ENCODE measurements at regions of chr11 and their contacts with region 1.

Region 1: GRCh38 chr11:65366340-65366773 is 11.8 kb downstream of the TIGD3 start:
- DNase-seq: peak; percentile 70 to 83 (median 76)
- ATAC-seq: peak; percentile 82
- H3K4me3 ChIP-seq: no peak overlapping the region
- H3K27ac ChIP-seq: peak overlapping the region; percentile 12; the same call in 2 of the 3 replicates
- H3K4me1 ChIP-seq: peaks cover 34 to 40% of the 10 kb centered on the region in 2 experiments; a peak in 4 of 5 replicates
- H3K27me3 ChIP-seq: no peaks in the 10 kb centered on the region
- CTCF ChIP-seq: peak; percentile 74 to 93 (median 78)
- EP300 ChIP-seq: no peak
- POLR2A ChIP-seq: no peak
- RAD21 ChIP-seq: peak; percentile 90 to 93

Region 2: DNA sequence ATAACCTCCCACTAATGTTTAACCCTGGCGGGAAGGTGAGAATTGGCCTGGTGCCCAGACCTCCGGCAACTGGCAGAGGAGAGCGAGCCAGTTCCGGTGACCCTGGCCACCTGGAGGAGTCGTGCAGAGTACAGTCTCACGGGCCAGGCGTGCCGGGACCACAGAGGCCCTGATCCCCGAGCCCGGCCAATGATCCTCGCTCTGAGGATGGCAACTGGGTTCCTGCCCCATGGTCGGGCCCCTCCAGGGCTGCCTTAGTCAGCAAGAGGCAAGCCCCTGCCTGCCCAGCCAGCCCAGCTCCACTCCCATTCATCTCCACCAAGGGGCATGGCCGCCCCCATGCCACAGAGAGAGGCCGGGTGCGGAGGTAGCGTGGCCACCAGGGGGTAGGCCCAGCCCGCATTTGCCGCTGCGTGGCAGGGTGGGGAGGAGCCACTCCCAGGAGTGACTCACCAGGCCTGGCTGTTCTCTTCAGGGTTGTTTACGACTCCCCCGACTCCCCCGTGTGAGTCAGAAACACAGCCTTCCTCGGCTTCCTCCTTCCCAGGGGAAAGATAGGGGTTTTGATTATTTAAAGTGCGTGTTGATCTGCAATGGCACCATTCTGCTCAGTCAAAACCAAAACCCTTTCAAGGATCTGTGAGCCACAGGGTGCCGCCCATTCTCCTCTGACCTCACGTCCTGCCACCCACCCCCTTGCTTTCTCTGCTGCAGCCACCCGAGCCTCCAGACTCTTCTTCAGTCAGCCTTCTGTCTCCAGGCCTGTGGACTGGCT is 15.9 kb after region 1 on chr11 and contains the start of gene SLC25A45:
- CTCF ChIA-PET with region 1: interaction called, 8 read pairs
- POLR2A ChIA-PET with region 1: interaction called, 15 read pairs
- in situ Hi-C with region 1: no loop called
- intact Hi-C with region 1: no loop called
- DNase-seq: peak; percentile 86 to 96 (median 90)
- ATAC-seq: peak; percentile 93
- H3K4me3 ChIP-seq: peak within 1 kb of the TSS; percentile 37
- H3K27ac ChIP-seq: peak within 1 kb of the TSS; percentile 93
- H3K4me1 ChIP-seq: peaks cover 35 to 81% of the 10 kb centered on the region in 2 experiments
- H3K27me3 ChIP-seq: no peaks in the 10 kb centered on the region
- CTCF ChIP-seq: peak; percentile 84 to 92 (median 91)
- EP300 ChIP-seq: peak; percentile 85
- POLR2A ChIP-seq: peak; percentile 73
- RAD21 ChIP-seq: peak; percentile 93 to 95
- polyA plus RNA-seq, gene SLC25A45: 0.15 to 0.34 TPM

Region 3: GRCh38 chr11:65432686-65433582 is 66.6 kb after region 1 on chr11:
- CTCF ChIA-PET with region 1: interaction called, 4 read pairs
- POLR2A ChIA-PET with region 1: interaction called, 4 read pairs
- in situ Hi-C with region 1: no loop called
- intact Hi-C with region 1: loop called (anchors 2 kb)
- DNase-seq: peak in 1 of 4 experiments; percentile 62
- ATAC-seq: no peak
- H3K4me3 ChIP-seq: no peak overlapping the region
- H3K27ac ChIP-seq: no peak overlapping the region
- H3K4me1 ChIP-seq: peaks cover 3 to 29% of the 10 kb centered on the region in 2 experiments; a peak in 4 of 5 replicates
- H3K27me3 ChIP-seq: no peaks in the 10 kb centered on the region
- CTCF ChIP-seq: peak; percentile 27 to 61 (median 32); a peak in 3 of 6 replicates
- EP300 ChIP-seq: no peak
- POLR2A ChIP-seq: peak; percentile 64
- RAD21 ChIP-seq: peak; percentile 59 to 71

Region 4: GRCh38 chr11:65471410-65471762 is 105.0 kb after region 1 on chr11:
- CTCF ChIA-PET with region 1: interaction called, 6 read pairs
- POLR2A ChIA-PET with region 1: interaction called, 12 read pairs
- in situ Hi-C with region 1: no loop called
- intact Hi-C with region 1: loop called (anchors 1 kb)
- DNase-seq: peak; percentile 63 to 91 (median 77)
- ATAC-seq: peak; percentile 88
- H3K4me3 ChIP-seq: peak overlapping the region; percentile 42
- H3K27ac ChIP-seq: peak overlapping the region; percentile 96
- H3K4me1 ChIP-seq: peaks cover 38 to 55% of the 10 kb centered on the region in 2 experiments
- H3K27me3 ChIP-seq: no peaks in the 10 kb centered on the region
- CTCF ChIP-seq: peak; percentile 81 to 94 (median 94)
- EP300 ChIP-seq: no peak
- POLR2A ChIP-seq: no peak
- RAD21 ChIP-seq: peak; percentile 76 to 91

Region 5: DNA sequence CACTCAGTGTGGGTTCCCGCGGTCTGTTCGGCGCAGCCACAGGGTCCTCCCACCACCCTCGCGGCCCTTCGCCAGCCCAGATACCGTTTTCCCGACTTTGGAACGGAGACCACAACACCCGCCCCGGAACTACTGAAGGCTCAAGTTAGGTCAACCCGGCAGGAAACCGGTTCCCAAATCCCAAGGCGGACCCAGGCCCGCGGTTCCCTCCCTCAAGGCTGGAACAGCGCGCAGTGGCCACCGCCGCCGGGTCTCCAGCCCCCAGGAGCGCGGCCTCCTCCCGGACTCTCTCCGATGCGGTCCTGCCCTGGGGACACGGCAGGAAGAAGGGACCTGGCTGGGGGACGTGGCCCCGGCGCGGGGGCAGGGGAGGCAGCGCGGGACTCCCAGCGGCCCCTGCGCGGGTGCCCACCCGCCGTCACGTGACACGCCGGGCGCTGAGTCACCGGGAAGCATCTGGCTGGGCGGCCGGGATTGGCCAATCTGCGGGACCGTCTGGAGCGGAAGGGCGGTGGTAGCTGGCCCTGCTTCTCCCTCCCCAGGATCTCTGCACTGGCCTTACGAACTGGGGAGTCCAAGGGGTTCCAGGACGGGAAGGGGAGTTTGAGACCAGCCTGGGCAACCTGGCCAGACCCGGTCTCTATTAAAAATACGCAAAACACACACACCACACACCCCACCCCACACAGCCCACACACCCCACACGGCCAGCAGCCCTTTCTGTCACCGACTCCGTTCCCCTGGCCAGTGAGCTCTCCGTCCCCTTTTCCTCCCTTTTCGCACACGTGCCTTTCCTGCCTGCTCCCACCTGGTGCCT is 111.0 kb after region 1 on chr11:
- CTCF ChIA-PET with region 1: no interaction called
- POLR2A ChIA-PET with region 1: interaction called, 12 read pairs
- in situ Hi-C with region 1: no loop called
- intact Hi-C with region 1: no loop called
- DNase-seq: peak; percentile 95 to 98 (median 96)
- ATAC-seq: peak; percentile 80
- H3K4me3 ChIP-seq: peak overlapping the region; percentile 93
- H3K27ac ChIP-seq: peak overlapping the region; percentile 99
- H3K4me1 ChIP-seq: peaks cover 36 to 59% of the 10 kb centered on the region in 2 experiments
- H3K27me3 ChIP-seq: no peaks in the 10 kb centered on the region
- CTCF ChIP-seq: no peak
- EP300 ChIP-seq: peak; percentile 70
- POLR2A ChIP-seq: peak; percentile 92
- RAD21 ChIP-seq: peak in 1 of 2 experiments; percentile 5; a peak in 1 of 4 replicates

Region 6: DNA sequence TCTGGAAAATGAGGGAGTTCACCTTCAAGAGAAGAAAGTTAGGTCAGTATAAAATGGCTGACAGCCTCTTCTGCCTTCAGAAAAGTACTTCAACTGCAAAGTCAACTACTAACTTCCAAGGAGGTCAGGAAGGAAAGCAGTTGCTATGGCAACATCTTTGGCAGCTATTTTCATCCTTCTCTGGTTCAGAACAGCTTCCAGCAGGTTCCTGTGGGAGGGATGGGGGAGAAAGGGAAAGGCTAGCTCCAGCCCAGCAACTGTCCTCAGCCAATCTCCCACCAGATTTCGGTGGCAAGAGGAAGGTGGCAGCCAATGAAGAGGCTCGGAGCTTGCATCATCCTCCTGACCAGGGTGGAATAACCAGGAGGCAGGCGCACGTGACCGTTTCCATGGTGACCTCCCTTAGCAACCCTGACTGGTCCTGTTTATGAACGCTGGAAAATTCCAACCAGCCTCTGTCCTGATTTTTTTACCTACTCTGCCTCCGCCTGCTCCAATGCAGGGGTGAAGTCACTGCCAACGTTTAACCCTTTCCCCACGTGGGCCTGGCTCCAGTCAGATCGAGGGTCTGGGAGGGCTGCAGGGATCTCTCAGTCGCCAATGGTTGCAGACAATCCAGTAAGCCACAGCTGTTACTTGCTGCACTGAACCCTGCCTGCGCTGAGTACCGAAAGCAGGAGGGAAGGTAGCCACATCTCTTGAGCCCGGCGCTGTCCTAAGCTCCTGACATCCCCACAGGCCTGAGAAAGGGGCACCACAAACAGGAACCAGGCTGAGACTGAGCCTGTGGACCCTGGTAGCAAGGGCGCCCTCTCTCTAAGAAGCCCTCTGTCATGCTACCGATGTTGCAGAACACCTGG is 121.3 kb after region 1 on chr11:
- CTCF ChIA-PET with region 1: no interaction called
- POLR2A ChIA-PET with region 1: no interaction called
- in situ Hi-C with region 1: no loop called
- intact Hi-C with region 1: no loop called
- DNase-seq: peak; percentile 72 to 93 (median 81)
- ATAC-seq: peak; percentile 81
- H3K4me3 ChIP-seq: no peak overlapping the region
- H3K27ac ChIP-seq: peak overlapping the region; percentile 40; the same call in 1 of the 3 replicates
- H3K4me1 ChIP-seq: peaks cover 69 to 75% of the 10 kb centered on the region in 2 experiments
- H3K27me3 ChIP-seq: no peaks in the 10 kb centered on the region
- CTCF ChIP-seq: no peak
- EP300 ChIP-seq: no peak
- POLR2A ChIP-seq: no peak
- RAD21 ChIP-seq: no peak

Region 7: DNA sequence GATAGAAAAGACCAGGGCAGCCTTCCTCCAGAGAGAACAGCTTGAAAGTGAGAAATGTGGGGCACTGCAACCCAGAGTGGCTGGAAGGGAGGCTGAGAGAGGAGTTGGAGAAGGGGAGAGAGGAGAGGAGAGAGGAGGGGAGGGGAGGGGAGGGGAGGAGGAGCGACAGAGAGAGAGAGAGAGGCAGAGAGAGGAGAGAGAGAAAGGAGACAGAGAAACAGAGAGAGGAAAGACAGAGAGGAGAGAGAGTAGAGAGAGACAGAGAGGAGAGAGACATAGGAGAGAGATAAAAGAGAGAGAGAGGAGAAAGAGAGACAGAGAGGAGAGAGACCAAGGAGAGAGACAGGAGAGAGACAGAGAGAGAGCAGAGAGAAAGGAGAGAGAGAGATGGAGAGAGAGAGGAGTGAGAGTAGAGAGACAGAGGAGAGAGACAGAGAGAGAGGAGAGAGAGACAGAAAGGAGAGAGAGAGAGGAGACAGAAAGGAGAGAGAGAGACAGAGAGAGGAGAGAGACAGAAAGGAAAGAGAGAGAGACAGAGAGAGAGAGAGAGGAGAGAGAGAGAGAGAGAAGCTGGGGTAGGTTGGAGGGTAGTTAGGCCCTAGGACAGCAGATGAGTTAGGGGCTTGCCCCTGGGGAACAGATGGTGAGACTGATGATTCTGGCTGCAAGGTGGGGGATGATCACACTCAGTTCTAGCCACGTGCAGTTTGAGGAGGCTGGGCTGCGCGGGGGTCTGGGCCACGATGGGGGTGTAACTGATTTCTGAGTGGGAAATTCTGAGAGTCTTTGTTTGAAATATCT is 150.0 kb after region 1 on chr11:
- CTCF ChIA-PET with region 1: interaction called, 7 read pairs
- POLR2A ChIA-PET with region 1: interaction called, 3 read pairs
- in situ Hi-C with region 1: loop called (anchors 5 kb)
- intact Hi-C with region 1: no loop called
- DNase-seq: no peak
- ATAC-seq: peak; percentile 62
- H3K4me3 ChIP-seq: no peak overlapping the region
- H3K27ac ChIP-seq: no peak overlapping the region
- H3K4me1 ChIP-seq: peaks cover 0 to 12% of the 10 kb centered on the region in 2 experiments; a peak in 2 of 5 replicates
- H3K27me3 ChIP-seq: no peaks in the 10 kb centered on the region
- CTCF ChIP-seq: no peak
- EP300 ChIP-seq: no peak
- POLR2A ChIP-seq: no peak
- RAD21 ChIP-seq: no peak

Region 8: GRCh38 chr11:65574109-65574810 is 207.9 kb after region 1 on chr11:
- CTCF ChIA-PET with region 1: no interaction called
- POLR2A ChIA-PET with region 1: no interaction called
- in situ Hi-C with region 1: no loop called
- intact Hi-C with region 1: no loop called
- DNase-seq: peak; percentile 86 to 96 (median 90)
- ATAC-seq: peak; percentile 71
- H3K4me3 ChIP-seq: peak overlapping the region; percentile 88
- H3K27ac ChIP-seq: peak overlapping the region; percentile 89
- H3K4me1 ChIP-seq: peaks cover 59 to 91% of the 10 kb centered on the region in 2 experiments
- H3K27me3 ChIP-seq: no peaks in the 10 kb centered on the region; a peak in 1 of 5 replicates
- CTCF ChIP-seq: peak; percentile 86 to 96 (median 87)
- EP300 ChIP-seq: 0 out of 2 replicates have a peak, but pooled peaks have one; percentile 24
- POLR2A ChIP-seq: no peak; the same call in 1 of the 2 replicates
- RAD21 ChIP-seq: peak; percentile 72 to 74